Dorsolateral prefrontal cortex (tissue), 120 donors: ENCODE measurements at regions of chr1 and their contacts with region 1.

Region 1: DNA sequence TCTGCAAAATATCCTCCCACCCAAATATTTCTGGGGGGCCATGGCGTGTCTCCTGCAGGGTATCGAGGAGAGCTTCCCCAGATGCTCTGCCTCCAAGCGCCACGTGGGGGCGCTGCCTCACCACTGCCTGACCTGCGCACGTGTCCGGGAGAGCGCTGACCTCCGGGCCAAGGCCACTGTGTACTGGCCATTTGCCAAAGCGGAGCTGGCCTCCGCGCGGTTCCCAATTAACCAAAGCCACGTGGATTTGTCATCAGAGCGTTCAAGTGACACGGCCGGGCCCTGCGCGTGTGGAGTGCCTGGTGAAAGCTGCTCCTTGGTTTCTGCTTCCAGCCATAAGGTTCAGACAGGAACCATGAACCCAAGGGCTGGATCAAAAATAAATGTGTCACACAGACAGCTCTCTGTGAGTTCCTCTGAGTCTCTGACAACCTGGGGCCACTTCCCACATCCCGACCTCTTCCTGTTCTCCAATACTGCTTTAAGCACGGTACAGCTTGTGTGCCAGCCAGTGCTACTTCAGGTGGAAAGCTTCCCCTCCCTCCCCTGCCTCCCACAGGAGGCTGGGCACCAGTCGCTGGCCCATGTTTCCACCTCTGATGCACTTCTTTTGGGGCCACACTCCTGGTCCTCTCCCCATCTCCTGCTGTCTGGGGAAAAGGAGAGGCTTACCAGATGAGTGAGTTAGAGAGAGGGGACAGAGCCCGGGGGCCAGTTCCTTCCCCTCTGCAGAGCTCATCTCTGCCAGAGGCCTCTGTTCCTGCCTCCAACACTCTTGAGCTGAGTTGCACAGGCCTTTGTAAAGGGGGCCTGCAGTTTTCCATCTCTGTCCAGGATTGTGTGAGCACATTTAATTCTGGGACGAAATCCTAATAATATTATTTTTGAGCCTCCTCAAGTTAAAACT is 26.1 kb downstream of the ZP4 start:
- DNase-seq: peak; percentile 41 to 83 (median 70)
- H3K4me3 ChIP-seq: peak overlapping the region in 49 of 59 donors; percentile 2 to 55 (median 36)
- H3K27ac ChIP-seq: no peak overlapping the region
- H3K27me3 ChIP-seq: no peaks in the 10 kb centered on the region
- CTCF ChIP-seq: peak; percentile 72 to 98 (median 93)

Region 2: GRCh38 chr1:237701534-237701933 is 163.1 kb before region 1 on chr1:
- intact Hi-C with region 1: no loop called
- DNase-seq: no peak
- H3K4me3 ChIP-seq: no peak overlapping the region
- H3K27ac ChIP-seq: no peak overlapping the region
- H3K27me3 ChIP-seq: no peaks in the 10 kb centered on the region
- CTCF ChIP-seq: no peak

Region 3: DNA sequence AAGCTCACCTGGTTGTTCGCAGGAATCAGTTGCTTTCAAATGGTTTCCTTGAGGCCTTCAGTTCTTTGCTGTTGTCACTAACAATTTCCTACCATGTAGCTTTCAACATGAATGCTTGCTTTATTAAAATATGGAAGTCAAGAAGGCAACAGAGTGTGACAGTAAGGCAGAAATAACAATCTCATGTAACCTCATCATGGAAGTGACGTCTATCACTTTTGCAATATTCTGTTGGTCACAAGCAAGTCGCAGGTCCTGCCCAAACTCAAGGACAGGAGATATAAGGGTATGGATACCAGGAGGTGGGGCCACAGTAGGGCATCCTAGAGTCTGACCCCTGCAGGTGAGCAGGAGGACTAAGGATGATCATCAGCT is 323.0 kb after region 1 on chr1:
- intact Hi-C with region 1: loop called in 1 of 2 experiments (anchors 10 kb)
- DNase-seq: no peak
- H3K4me3 ChIP-seq: no peak overlapping the region
- H3K27ac ChIP-seq: no peak overlapping the region
- H3K27me3 ChIP-seq: no peaks in the 10 kb centered on the region
- CTCF ChIP-seq: no peak

Region 4: DNA sequence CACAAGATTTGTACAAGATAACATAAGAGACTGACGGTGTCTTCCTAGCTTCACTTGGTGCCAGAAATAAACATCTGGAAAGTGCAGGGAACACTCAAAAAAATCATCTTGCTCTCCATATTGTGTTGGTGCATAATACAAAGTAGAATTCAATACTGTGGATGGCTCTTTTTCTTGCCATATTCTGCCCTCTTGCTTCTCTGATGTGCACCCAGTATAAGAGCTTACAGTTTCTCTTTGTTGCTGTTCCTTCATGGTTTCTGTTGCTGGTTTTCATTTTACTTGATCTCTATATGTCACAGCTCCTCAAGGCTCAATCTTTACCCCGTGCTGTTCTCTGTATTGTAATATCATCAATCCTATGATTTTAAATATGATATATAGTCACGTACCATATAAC is 554.6 kb after region 1 on chr1:
- intact Hi-C with region 1: loop called in 1 of 2 experiments (anchors 10 kb)
- DNase-seq: no peak
- H3K4me3 ChIP-seq: no peak overlapping the region
- H3K27ac ChIP-seq: no peak overlapping the region
- H3K27me3 ChIP-seq: no peaks in the 10 kb centered on the region
- CTCF ChIP-seq: peak in 37 of 56 donors; percentile 11 to 70 (median 36)